ENCODE measurements at regions of chr2 and their contacts with region 1.

Region 1: GRCh38 chr2:160091381-160091780 is 29.0 kb upstream of the PLA2R1 start:
- DNase-seq: peak in 1 of 2 experiments; percentile 42
- H3K4me3 ChIP-seq: no peak overlapping the region
- H3K27ac ChIP-seq: no peak overlapping the region
- H3K4me1 ChIP-seq: peaks cover 7% of the 10 kb centered on the region; the same call in 1 of the 2 replicates
- H3K27me3 ChIP-seq: no peaks in the 10 kb centered on the region
- CTCF ChIP-seq: no peak

Region 2: DNA sequence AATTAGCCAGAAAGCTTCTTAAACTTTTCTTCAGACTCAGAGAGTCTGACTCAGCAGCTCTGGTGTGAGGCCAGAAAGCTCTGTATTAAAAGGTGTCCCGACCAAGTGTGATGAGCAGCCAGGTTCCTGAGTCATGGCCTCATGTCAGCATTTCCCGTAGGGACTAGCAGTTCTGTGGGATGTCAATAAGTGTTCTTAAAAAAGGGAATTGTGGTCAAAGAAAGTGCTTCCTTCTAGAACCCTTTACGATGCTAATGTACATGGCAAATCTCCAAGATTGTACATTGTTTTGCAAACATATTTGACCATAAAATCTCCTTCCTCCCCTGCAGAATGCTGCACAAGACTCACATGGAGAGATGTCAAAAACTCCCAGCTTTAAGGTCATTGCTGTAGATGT is 109.1 kb before region 1 on chr2:
- CTCF ChIA-PET with region 1: no interaction called
- POLR2A ChIA-PET with region 1: interaction called, 12 read pairs
- intact Hi-C with region 1: no loop called
- DNase-seq: peak in 1 of 2 experiments; percentile 13
- H3K4me3 ChIP-seq: no peak overlapping the region
- H3K27ac ChIP-seq: no peak overlapping the region
- H3K4me1 ChIP-seq: no peaks in the 10 kb centered on the region
- H3K27me3 ChIP-seq: no peaks in the 10 kb centered on the region
- CTCF ChIP-seq: no peak